ENCODE measurements at regions of chr9 and their contacts with region 1.

Region 1: DNA sequence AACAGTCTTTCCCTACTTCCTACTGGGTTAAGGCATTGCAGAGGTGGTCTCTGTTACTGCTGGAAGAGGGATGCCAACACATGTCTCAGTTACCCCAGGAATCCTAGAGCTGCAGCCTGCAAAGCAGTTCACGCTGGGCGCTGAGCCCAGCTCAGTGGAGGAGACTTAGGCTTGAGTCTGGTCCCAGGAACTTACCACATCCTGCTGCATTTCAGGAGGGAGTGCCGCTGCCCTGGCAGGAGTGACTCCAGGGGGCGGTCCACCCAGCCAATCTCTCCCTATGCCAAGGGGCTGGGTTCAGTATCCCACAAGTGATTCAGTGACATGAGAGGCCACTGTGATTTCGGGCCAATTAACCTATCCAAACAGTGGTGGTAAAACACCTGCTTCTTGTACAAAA is 7.6 kb downstream of the TTC16 start:
- DNase-seq: no peak
- ATAC-seq: no peak
- H3K4me3 ChIP-seq: no peak overlapping the region
- H3K27ac ChIP-seq: peak overlapping the region; percentile 50; the same call in 1 of the 2 replicates
- H3K4me1 ChIP-seq: peaks cover 54 to 62% of the 10 kb centered on the region in 2 experiments
- H3K27me3 ChIP-seq: no peaks in the 10 kb centered on the region
- CTCF ChIP-seq: no peak
- POLR2A ChIP-seq: no peak
- RAD21 ChIP-seq: no peak

Region 2: GRCh38 chr9:127083138-127083980 is 640.1 kb before region 1 on chr9:
- CTCF ChIA-PET with region 1: no interaction called
- POLR2A ChIA-PET with region 1: no interaction called
- RAD21 ChIA-PET with region 1: no interaction called
- intact Hi-C with region 1: no loop called
- DNase-seq: no peak
- ATAC-seq: no peak
- H3K4me3 ChIP-seq: no peak overlapping the region
- H3K27ac ChIP-seq: no peak overlapping the region
- H3K4me1 ChIP-seq: no peaks in the 10 kb centered on the region
- H3K27me3 ChIP-seq: no peaks in the 10 kb centered on the region
- CTCF ChIP-seq: no peak
- POLR2A ChIP-seq: no peak
- RAD21 ChIP-seq: no peak

Region 3: GRCh38 chr9:127503947-127504782 is 219.3 kb before region 1 on chr9:
- CTCF ChIA-PET with region 1: no interaction called
- POLR2A ChIA-PET with region 1: no interaction called
- RAD21 ChIA-PET with region 1: interaction called in 1 of 2 experiments, 3 read pairs
- intact Hi-C with region 1: loop called (anchors 1 kb)
- DNase-seq: peak; percentile 62
- ATAC-seq: peak; percentile 83
- H3K4me3 ChIP-seq: no peak overlapping the region
- H3K27ac ChIP-seq: peak overlapping the region; percentile 45
- H3K4me1 ChIP-seq: 0 out of 4 replicates have a peak, but pooled peaks cover 0 to 4% of the 10 kb centered on the region in 2 experiments
- H3K27me3 ChIP-seq: no peaks in the 10 kb centered on the region
- CTCF ChIP-seq: peak; percentile 89 to 93 (median 90)
- POLR2A ChIP-seq: no peak
- RAD21 ChIP-seq: peak; percentile 98

Region 4: DNA sequence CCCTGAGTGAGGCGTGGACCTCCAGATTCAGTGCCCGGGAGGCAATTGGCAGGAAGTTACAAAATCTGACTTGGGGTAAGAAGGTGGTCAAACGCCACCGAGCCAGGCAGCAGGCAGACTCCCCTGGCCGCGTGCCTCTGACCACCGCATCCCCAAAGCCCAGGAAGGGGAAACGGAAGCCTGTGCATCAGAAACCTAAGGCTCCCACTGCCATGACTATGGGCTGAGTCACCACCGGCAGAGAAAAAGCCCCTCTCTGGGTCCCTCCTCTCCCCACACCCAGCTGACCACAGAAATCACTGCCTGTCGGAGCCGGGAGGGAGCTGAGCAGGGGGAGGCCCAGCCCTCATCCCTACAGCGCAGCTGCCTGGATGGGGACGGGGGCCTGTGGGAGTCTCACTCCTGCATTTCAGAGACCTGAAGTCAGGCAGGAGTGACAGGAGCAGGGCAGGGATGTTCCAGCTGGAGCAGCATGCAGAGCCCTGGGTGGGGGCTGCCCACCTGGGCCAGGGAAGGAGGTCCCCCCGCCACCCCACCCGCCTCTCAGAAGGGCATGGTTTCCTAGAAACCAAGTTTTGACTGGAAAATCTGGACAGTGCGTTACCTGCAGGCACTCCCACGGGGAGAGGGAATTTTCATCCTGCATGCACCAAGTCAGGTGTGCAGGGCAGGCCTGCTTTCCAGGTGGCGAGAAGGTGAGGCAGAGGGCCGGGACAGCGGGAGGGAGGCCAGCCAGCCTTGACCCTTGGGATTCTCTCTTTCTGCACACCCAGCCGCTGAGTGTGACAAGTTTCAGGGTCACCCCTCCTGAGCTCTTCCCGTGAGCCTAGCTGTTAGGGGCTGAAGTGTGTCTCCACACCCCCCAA is 203.9 kb before region 1 on chr9:
- CTCF ChIA-PET with region 1: no interaction called
- POLR2A ChIA-PET with region 1: no interaction called
- RAD21 ChIA-PET with region 1: no interaction called
- intact Hi-C with region 1: loop called (anchors 5 kb)
- DNase-seq: no peak
- ATAC-seq: no peak
- H3K4me3 ChIP-seq: no peak overlapping the region
- H3K27ac ChIP-seq: no peak overlapping the region
- H3K4me1 ChIP-seq: peaks cover 0 to 18% of the 10 kb centered on the region in 2 experiments; a peak in 1 of 4 replicates
- H3K27me3 ChIP-seq: no peaks in the 10 kb centered on the region
- CTCF ChIP-seq: no peak
- POLR2A ChIP-seq: no peak
- RAD21 ChIP-seq: no peak

Region 5: DNA sequence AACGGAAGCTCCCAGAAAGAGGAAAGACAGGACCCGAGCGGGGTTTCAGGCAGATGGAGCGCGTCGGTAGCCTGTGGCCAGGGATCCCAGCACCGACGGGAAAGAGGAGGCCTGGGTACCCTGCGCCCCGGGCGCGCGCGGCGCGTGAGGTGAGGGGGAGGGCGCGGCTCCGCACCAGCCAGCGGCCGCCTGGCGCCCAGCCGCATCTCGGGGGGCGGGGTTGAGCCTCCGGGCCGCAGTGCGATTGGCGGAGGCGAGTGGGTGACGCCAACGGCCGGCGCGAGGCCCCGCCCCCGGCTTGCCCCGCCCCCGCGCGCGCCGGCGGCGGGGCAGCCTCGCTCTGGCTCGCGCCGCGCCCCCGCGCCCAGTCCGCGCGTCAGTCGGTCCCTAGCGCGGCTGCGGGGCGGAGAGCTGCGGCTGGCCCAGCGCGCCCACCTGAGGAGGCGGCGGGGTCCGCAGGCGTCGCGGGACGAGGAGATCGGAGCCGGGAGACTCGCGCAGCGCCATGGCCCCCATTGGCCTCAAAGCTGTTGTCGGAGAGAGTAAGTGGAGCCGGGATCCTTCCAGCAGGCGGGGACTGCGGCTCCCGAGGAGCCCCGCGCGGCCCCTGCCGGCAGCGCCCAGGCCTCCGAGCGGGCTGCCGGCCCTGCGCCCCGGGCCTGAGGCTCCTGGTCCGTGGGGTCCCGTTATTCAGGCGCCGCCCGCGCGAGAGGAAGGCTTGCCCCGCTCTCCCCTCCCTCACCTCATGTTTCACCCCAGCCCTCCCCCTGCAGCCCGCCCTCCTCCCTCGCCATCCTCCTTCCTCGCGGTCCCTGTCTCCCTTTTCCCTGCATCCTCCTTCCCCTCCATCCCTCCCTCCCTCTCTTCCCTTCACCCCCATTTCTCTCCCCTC is 111.3 kb before region 1 on chr9 and contains the start of gene STXBP1:
- CTCF ChIA-PET with region 1: no interaction called
- POLR2A ChIA-PET with region 1: no interaction called
- RAD21 ChIA-PET with region 1: no interaction called
- intact Hi-C with region 1: loop called (anchors 5 kb)
- DNase-seq: peak; percentile 51
- ATAC-seq: peak; percentile 75
- H3K4me3 ChIP-seq: peak within 1 kb of the TSS; percentile 66 to 83
- H3K27ac ChIP-seq: peak within 1 kb of the TSS; percentile 69
- H3K4me1 ChIP-seq: peaks cover 20 to 31% of the 10 kb centered on the region in 2 experiments
- H3K27me3 ChIP-seq: no peaks in the 10 kb centered on the region
- CTCF ChIP-seq: 0 out of 6 replicates have a peak, but pooled peaks of 2 of the 3 experiments have one; percentile 10 to 16
- POLR2A ChIP-seq: peak; percentile 84
- RAD21 ChIP-seq: no peak
- total RNA-seq, gene STXBP1: 40.6 TPM

Measured in HCT116 (cell line).